AG04449 (cell line): ENCODE measurements at regions of chr20 and their contacts with region 1.

Region 1: GRCh38 chr20:5100684-5101347 is 18.9 kb downstream of the PCNA start:
- DNase-seq: no peak
- H3K4me3 ChIP-seq: no peak overlapping the region
- CTCF ChIP-seq: peak; percentile 72

Region 2: DNA sequence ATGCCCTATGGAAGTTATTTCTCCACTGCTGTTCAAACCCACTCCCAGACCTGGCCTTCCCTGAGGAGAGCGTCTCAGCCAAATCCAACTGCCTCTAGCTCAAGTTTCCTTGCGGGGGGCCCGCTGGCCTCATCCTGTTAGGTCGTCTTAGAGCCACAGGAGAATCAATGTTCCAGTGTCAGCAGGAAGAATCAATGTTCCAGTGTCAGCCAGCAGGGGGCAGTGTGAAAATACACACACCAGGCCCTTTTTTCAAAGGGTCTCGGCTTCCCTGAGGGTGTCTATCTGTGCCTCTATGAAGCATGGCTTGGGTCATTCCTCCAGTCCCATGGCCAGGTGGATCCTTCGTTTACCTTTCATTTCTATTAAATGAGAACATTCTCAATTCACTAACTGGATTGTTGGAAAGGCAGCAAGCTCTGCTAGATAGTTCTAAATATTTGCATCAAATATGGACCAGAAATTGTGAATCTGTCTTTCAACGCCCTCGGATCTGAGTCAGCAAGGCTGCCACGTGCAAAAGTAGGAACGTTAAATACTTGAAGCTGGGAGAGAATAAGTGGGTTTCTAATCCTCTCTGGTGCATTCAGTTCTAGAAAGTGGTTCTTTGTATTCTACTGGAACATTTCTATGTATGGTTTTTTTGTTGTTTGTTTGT is 359.9 kb before region 1 on chr20:
- CTCF ChIA-PET with region 1: interaction called, 41 read pairs
- POLR2A ChIA-PET with region 1: no interaction called
- DNase-seq: no peak
- H3K4me3 ChIP-seq: no peak overlapping the region
- CTCF ChIP-seq: peak; percentile 67

Region 3: DNA sequence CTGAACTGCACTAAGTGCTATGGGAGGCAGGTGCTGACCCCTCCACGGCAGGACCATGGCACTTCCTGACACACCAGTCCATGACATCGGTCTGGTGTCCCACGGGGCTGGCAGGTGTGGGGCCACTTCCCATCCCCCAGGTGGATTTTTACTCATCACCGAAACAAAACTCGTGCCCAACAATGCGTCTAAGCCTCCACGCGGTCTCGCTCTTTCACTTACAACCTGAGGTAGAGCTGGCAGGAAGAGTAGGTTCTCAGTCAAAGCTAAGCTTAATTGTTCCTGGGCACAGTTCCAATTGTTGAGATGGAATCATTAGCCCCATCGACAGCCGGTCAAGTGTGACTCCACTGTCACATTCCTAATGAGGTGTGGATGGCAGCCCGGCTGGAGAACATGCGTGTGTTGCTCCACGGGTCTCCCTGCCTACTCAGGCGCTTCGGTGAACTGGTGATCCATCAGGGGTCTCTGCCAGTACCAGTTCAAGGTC is 225.2 kb before region 1 on chr20:
- CTCF ChIA-PET with region 1: no interaction called
- POLR2A ChIA-PET with region 1: no interaction called
- DNase-seq: no peak
- H3K4me3 ChIP-seq: no peak overlapping the region
- CTCF ChIP-seq: no peak

Region 4: GRCh38 chr20:4961746-4962145 is 139.1 kb before region 1 on chr20:
- CTCF ChIA-PET with region 1: interaction called, 61 read pairs
- POLR2A ChIA-PET with region 1: no interaction called
- DNase-seq: no peak
- H3K4me3 ChIP-seq: no peak overlapping the region
- CTCF ChIP-seq: no peak

Region 5: DNA sequence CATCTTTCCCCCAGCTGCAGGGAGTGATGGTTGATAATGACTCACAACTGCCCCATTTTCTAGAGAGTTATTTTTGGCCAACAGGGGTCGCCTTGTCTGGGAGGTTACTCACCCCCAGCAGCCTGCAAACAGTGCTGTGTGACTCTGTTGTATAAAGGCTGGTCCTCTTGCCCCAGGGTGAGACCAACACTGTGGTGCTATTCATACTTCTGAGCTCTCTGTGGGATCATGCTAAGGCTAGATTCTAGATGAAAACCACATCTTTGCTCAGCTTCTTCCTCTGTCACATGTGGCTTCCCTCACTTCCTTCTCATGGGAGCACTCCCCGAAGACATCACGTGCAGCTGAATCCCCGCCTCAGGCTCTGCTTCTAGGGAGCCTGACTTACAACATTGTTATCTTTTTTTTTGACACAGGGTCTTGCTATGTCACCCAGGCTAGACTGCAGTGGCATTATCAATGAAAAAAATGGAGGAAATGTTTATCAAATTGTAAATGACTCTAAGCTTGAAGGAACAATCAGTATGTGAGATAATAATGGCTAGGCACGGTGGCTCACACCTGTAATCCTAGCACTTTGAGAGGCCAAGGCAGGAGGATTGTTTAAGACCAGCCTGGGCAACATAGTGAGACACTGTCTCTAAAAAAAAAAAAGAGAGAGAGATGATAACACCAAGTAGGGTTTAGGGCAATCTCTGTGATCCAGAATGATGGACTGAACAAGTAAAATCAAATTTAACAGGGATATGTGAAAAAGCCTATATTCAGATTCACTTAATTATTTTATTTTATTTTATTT is 43.8 kb before region 1 on chr20:
- CTCF ChIA-PET with region 1: interaction called, 13 read pairs
- POLR2A ChIA-PET with region 1: no interaction called
- DNase-seq: no peak
- H3K4me3 ChIP-seq: no peak overlapping the region
- CTCF ChIP-seq: peak; percentile 36